Naive thymus-derived CD4-positive, alpha-beta T cell (primary cell): ENCODE measurements at regions of chr5 and their contacts with region 1.

Region 1: DNA sequence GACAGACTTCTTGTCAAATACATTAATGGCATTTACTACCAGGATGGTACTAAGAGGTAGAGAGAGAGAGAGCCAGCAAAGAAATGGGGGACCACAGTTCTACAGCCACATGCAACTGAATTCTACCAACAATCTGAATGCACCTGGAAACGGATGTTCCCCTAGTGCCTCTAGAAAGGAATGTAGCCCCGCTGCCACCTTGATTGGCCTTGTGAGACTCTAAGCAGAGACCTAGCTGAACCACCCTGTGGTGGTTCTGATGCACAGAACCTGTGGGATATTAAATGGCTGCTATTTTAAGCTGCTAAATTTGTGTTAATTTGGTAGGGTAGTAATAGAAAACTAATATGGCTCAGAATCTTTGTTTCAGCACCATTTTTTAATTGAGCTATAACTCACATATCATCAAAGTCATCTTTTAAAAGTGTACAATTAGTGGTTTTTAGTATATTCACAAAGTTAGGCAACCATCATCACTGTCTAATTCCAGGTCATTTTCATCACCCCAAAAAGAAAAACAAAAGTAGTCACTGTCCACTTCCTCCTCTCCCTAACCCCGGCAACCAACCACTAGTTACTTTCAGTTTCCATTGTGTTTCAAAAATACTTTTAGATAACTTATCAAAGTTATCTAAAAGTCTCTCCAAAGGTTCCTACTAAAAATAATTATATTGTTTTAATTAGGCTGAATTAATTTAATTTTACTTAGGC is 51.7 kb downstream of the CPLANE1 start:
- DNase-seq: peak in 5 of 9 donors; percentile 6 to 32 (median 18)
- ATAC-seq: peak; percentile 69
- H3K4me3 ChIP-seq: peak overlapping the region; percentile 54
- H3K4me3 Mint-ChIP-seq: peak overlapping the region; percentile 78 to 96 (median 87)
- H3K27ac ChIP-seq: peak overlapping the region; percentile 70
- H3K27ac Mint-ChIP-seq: peak overlapping the region; percentile 83 to 98 (median 94)
- H3K4me1 ChIP-seq: peaks cover 6 to 9% of the 10 kb centered on the region in 2 donors
- H3K4me1 Mint-ChIP-seq: peaks cover 9 to 28% (median 25%) of the 10 kb centered on the region in 7 donors
- H3K27me3 ChIP-seq: no peaks in the 10 kb centered on the region
- H3K27me3 Mint-ChIP-seq: no peaks in the 10 kb centered on the region

Region 2: DNA sequence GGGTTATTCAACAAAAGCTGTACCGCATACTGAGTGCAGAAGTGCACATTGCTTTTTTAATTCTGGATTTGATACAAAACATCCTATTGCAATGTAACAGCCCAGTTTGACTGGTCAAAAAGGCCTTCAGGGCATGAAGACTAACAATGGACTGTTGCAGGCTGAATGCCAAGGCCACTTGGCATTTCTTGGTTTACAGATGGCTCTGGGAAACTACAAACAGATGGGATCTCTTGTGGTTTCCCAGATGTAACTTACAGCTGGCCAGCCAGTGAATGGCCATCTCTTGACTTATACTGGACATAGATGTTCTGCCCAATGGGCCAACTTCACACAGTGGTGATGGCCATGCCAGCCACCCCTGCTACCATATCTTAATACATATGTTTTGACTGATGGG is 1167.6 kb before region 1 on chr5:
- CTCF ChIA-PET with region 1: no interaction called
- POLR2A ChIA-PET with region 1: no interaction called
- intact Hi-C with region 1: no loop called
- DNase-seq: no peak
- ATAC-seq: no peak
- H3K4me3 ChIP-seq: no peak overlapping the region
- H3K4me3 Mint-ChIP-seq: no peak overlapping the region
- H3K27ac ChIP-seq: no peak overlapping the region
- H3K27ac Mint-ChIP-seq: no peak overlapping the region
- H3K4me1 ChIP-seq: no peaks in the 10 kb centered on the region
- H3K4me1 Mint-ChIP-seq: no peaks in the 10 kb centered on the region
- H3K27me3 ChIP-seq: no peaks in the 10 kb centered on the region
- H3K27me3 Mint-ChIP-seq: peaks cover 0 to 18% (median 7%) of the 10 kb centered on the region in 5 donors

Region 3: GRCh38 chr5:37133939-37134338 is 63.6 kb before region 1 on chr5:
- CTCF ChIA-PET with region 1: no interaction called
- POLR2A ChIA-PET with region 1: no interaction called
- intact Hi-C with region 1: no loop called
- DNase-seq: no peak
- ATAC-seq: no peak
- H3K4me3 ChIP-seq: no peak overlapping the region
- H3K4me3 Mint-ChIP-seq: no peak overlapping the region
- H3K27ac ChIP-seq: no peak overlapping the region
- H3K27ac Mint-ChIP-seq: no peak overlapping the region
- H3K4me1 ChIP-seq: no peaks in the 10 kb centered on the region
- H3K4me1 Mint-ChIP-seq: peaks cover 0 to 2% (median 0%) of the 10 kb centered on the region in 7 donors
- H3K27me3 ChIP-seq: no peaks in the 10 kb centered on the region
- H3K27me3 Mint-ChIP-seq: no peaks in the 10 kb centered on the region

Region 4: GRCh38 chr5:37248970-37249686 is 51.6 kb after region 1 on chr5 and contains the start of gene CPLANE1:
- CTCF ChIA-PET with region 1: no interaction called
- POLR2A ChIA-PET with region 1: no interaction called
- intact Hi-C with region 1: loop called (anchors 1 to 2 kb)
- DNase-seq: peak; percentile 21 to 73 (median 53)
- ATAC-seq: peak; percentile 87
- H3K4me3 ChIP-seq: peak within 1 kb of the TSS; percentile 75
- H3K4me3 Mint-ChIP-seq: peak within 1 kb of the TSS; percentile 84 to 94 (median 90)
- H3K27ac ChIP-seq: peak within 1 kb of the TSS; percentile 77
- H3K27ac Mint-ChIP-seq: peak within 1 kb of the TSS; percentile 77 to 92 (median 86)
- H3K4me1 ChIP-seq: peaks cover 0 to 6% of the 10 kb centered on the region in 2 donors
- H3K4me1 Mint-ChIP-seq: peaks cover 5 to 30% (median 17%) of the 10 kb centered on the region in 7 donors
- H3K27me3 ChIP-seq: no peaks in the 10 kb centered on the region
- H3K27me3 Mint-ChIP-seq: no peaks in the 10 kb centered on the region
- total RNA-seq, gene CPLANE1: 8.0 to 14.7 (median 10.4) TPM